ENCODE measurements at regions of chr2 and their contacts with region 1.

Region 1: DNA sequence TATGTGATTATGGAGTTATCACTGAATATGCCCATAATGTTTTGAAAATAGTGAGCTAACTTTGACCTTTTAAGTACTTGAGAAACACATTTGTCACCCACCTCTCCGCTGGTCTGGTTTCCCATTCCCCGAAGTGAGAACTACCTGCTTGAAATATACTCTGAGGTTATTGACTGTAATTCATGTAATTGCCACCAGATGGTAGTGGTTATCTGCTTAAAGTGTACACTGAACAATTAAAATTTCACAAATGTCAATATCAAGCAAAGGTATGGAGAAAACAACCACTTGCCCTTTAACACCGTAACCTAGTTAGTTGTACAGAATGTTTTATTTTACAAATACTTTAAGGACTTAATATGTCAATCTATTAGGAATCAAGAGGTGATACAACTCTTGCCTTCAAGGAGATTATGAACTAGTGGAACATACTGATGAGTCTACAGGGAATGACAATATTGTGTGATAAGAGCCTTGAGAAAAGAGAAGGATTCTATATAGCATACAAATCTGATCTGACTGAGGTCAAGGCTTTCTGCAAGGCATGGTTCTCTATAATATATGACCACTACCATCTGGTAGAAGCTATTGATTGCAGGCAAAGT is 316.8 kb upstream of the KCNH7 start:
- DNase-seq: peak; percentile 35
- ATAC-seq: peak; percentile 52
- H3K4me3 ChIP-seq: no peak overlapping the region
- H3K27ac ChIP-seq: no peak overlapping the region
- H3K4me1 ChIP-seq: peaks cover 8% of the 10 kb centered on the region
- H3K27me3 ChIP-seq: no peaks in the 10 kb centered on the region
- CTCF ChIP-seq: peak; percentile 73
- POLR2A ChIP-seq: no peak
- RAD21 ChIP-seq: peak; percentile 80

Region 2: GRCh38 chr2:162449471-162449870 is 705.9 kb before region 1 on chr2:
- CTCF ChIA-PET with region 1: no interaction called
- POLR2A ChIA-PET with region 1: no interaction called
- dilution Hi-C with region 1: no loop called
- in situ Hi-C with region 1: no loop called
- intact Hi-C with region 1: no loop called
- DNase-seq: no peak
- ATAC-seq: no peak
- H3K4me3 ChIP-seq: no peak overlapping the region
- H3K27ac ChIP-seq: no peak overlapping the region
- H3K4me1 ChIP-seq: no peaks in the 10 kb centered on the region
- H3K27me3 ChIP-seq: no peaks in the 10 kb centered on the region
- CTCF ChIP-seq: no peak
- POLR2A ChIP-seq: no peak
- RAD21 ChIP-seq: no peak

Region 3: DNA sequence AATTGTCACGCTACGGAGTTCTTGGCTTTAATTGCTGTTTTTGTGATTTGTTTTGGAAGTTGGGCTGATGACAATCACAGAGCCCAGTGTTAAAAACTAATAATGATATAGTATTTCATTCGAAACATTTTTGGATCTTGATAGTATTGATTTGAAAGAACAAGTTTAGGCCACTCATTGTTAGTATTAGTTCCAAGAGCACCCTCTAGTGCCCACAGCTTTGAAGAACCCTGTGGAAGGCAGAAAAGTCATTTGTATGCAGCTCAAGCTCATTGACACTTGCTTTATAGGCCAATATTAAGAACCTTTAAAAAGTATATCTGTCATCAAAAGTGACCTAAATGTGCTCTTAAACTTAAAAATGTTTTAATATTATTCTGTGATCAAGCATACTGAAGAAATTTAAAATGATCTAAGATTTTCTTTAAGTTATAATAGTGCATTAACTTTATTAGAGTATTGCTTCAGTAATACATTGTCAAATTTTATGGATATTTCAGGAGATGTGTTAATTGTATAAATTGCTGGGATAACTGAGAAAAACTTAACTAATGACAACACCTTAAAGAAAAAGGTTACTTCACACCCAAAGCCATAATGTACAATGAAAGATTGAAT is 1274.9 kb after region 1 on chr2:
- CTCF ChIA-PET with region 1: no interaction called
- POLR2A ChIA-PET with region 1: no interaction called
- dilution Hi-C with region 1: no loop called
- in situ Hi-C with region 1: no loop called
- intact Hi-C with region 1: loop called (anchors 10 kb)
- DNase-seq: peak; percentile 38
- ATAC-seq: 0 out of 2 replicates have a peak, but pooled peaks have one; percentile 63
- H3K4me3 ChIP-seq: no peak overlapping the region
- H3K27ac ChIP-seq: no peak overlapping the region
- H3K4me1 ChIP-seq: no peaks in the 10 kb centered on the region
- H3K27me3 ChIP-seq: no peaks in the 10 kb centered on the region
- CTCF ChIP-seq: peak; percentile 67
- POLR2A ChIP-seq: no peak
- RAD21 ChIP-seq: peak; percentile 66

Region 4: DNA sequence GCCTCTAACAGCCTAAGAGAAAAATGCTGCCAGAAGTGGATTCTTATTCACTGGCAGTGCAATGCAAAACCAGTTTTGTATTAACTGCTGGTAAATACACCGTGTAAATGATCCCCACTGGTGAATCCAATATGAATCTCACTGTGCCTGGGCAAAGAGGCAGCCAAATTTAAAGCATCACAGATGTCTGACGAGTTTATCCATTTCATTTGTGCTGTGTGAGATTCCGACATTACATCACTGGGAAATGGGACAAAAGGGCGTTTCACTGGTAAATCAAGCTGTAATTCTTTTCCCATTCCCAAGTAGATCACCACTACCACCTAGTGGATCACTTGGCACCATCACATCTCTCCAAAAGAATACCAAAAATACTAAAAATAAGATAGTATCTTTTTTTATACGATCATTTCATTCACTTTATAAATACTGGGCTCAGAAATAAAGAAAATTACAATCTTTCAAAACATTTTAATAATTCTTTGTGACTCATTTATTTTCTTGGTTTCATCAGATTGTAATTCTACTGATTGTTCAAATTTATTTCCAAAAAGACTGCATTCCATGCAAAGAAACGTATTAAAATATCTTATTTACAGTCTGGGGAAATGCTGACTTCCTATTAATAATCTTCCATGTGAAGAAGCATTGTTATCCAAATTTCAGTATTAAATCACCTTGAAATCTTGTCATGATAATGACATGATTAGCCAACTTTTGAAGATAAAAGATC is 1340.3 kb after region 1 on chr2:
- CTCF ChIA-PET with region 1: no interaction called
- POLR2A ChIA-PET with region 1: no interaction called
- dilution Hi-C with region 1: no loop called
- in situ Hi-C with region 1: no loop called
- intact Hi-C with region 1: loop called (anchors 1 kb)
- DNase-seq: peak; percentile 43
- ATAC-seq: peak; percentile 48; the same call in 1 of the 2 replicates
- H3K4me3 ChIP-seq: no peak overlapping the region
- H3K27ac ChIP-seq: no peak overlapping the region
- H3K4me1 ChIP-seq: no peaks in the 10 kb centered on the region
- H3K27me3 ChIP-seq: no peaks in the 10 kb centered on the region
- CTCF ChIP-seq: peak; percentile 60
- POLR2A ChIP-seq: no peak
- RAD21 ChIP-seq: peak; percentile 65

Region 5: DNA sequence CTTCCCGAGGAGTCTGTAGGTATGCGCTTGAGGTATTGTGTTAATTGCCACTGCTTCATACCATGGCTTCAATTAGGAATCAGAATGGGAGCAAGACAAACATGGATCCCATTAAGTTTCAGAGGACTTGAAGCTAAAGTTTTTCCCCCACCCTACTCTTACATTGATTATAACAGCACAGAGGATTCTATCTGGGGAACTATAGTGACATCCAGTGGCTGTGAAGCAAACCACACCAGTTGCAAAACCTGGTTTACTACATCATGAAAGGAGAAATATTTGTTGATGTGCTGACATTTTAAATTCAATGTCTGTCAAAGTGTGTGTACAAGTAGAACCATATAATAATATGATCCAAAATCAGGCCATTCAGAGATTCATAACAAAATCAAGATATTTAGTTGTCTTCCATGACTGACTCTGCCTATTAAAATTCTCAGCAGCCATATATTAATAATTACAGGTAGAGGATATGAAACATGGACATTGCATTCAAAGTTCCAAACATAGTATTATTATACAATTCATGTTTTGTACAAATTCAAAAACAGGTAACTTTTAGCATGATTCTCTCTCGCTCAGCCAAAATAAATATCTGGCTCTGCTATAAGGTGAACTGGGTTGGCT is 1383.0 kb after region 1 on chr2:
- CTCF ChIA-PET with region 1: no interaction called
- POLR2A ChIA-PET with region 1: no interaction called
- dilution Hi-C with region 1: no loop called
- in situ Hi-C with region 1: no loop called
- intact Hi-C with region 1: loop called (anchors 1 kb)
- DNase-seq: peak; percentile 29
- ATAC-seq: peak; percentile 82
- H3K4me3 ChIP-seq: no peak overlapping the region
- H3K27ac ChIP-seq: no peak overlapping the region
- H3K4me1 ChIP-seq: no peaks in the 10 kb centered on the region
- H3K27me3 ChIP-seq: no peaks in the 10 kb centered on the region
- CTCF ChIP-seq: peak; percentile 50
- POLR2A ChIP-seq: no peak
- RAD21 ChIP-seq: peak; percentile 48

Region 6: DNA sequence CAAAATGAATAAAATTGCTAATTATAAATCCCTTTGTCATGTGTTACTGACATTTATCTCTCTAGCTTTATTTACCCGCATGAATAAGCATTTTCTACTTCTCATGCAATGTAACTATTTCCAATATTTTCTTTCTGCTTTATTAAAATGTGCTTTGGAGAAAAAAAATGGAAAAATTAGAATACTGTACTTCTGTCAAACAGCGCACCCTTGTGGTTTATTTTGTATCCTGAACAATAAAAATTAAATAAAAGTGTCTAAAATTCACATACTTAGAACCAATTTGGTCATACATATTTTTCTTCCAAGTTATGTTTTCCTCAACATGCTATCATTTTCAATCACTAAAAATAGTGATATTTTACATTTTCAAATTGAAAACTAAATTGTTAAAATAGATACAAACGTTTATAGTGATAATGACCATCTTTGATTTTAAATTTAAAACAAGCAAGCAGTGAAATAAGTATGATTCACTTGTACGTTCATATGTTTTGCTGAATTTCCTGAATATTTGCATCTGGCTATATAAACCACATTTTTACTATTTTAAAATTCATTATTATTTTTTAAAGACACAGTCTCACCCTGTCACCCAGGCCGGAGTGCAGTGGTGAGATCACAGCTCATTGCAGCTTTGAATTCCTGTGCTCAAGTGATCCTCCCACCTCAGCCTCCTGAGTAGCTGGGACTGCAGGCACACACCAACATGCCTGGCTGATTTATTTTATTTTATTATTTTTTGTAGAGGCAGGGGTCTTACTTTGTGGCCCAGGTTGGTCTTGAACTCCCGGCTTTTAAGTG is 1561.8 kb after region 1 on chr2:
- CTCF ChIA-PET with region 1: interaction called, 3 read pairs
- POLR2A ChIA-PET with region 1: no interaction called
- dilution Hi-C with region 1: no loop called
- in situ Hi-C with region 1: no loop called
- intact Hi-C with region 1: loop called (anchors 2 kb)
- DNase-seq: peak; percentile 35
- ATAC-seq: no peak
- H3K4me3 ChIP-seq: no peak overlapping the region
- H3K27ac ChIP-seq: no peak overlapping the region
- H3K4me1 ChIP-seq: no peaks in the 10 kb centered on the region
- H3K27me3 ChIP-seq: no peaks in the 10 kb centered on the region
- CTCF ChIP-seq: peak; percentile 70
- POLR2A ChIP-seq: no peak
- RAD21 ChIP-seq: peak; percentile 57